Activated CD8-positive, alpha-beta memory T cell treated with anti-CD3 and anti-CD28 coated beads, Interleukin-2, amount 10 ng/mL, durations not matched to agents 7 days and 5 days (primary cell): ENCODE measurements at regions of chr7 and their contacts with region 1.

Region 1: DNA sequence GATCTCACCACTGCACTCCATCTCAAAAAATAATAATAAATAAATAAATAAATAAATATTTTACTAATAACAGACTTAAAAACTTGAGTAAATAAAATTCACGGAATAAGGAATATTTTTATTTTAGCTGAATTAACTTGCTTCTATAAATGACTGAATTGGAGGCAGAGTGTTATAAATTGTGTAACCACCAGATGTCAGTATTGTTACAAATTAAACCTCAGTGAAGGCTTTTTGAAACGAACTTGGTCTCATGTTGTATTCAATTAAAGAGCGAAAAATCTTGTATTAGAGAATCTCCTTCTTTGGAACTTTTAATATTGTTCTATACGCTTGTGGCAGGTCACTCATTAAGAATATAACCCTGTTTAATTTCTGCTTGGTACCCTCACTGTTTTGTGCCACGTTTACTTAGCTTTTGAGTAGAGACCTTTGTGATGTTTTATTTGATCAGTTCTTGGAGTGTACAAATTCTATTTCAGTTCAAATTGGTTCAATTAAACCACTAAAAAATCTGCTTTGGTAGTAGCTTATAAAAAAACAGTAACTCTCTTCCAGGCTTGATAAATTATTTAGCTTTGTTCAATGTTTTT is 45.6 kb upstream of the SCIN start:
- DNase-seq: no peak
- ATAC-seq: no peak
- H3K4me3 Mint-ChIP-seq: no peak overlapping the region
- H3K27ac Mint-ChIP-seq: no peak overlapping the region
- H3K4me1 Mint-ChIP-seq: no peaks in the 10 kb centered on the region
- H3K27me3 Mint-ChIP-seq: peaks cover 14% of the 10 kb centered on the region

Region 2: DNA sequence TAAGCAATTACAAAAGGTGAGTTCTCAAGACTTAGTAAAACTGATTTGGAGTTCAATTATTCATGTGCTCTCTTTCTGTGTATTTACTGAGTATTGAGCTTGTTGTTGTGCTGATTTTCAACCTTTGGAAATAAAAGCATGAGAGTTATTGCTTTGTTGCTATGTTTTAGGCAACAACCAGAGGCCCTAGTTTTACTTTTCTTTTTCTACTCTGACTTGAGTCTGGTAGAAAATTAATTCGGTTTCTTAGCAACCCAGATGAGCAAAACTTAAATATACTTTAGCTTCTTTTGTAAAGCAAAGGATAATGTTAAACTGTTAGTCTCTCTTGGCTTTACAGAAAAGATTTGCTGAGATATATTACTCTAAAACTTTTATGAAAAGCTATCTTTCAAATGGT is 20.7 kb before region 1 on chr7:
- CTCF ChIA-PET with region 1: no interaction called
- DNase-seq: no peak
- ATAC-seq: no peak
- H3K4me3 Mint-ChIP-seq: no peak overlapping the region
- H3K27ac Mint-ChIP-seq: no peak overlapping the region
- H3K4me1 Mint-ChIP-seq: no peaks in the 10 kb centered on the region
- H3K27me3 Mint-ChIP-seq: no peaks in the 10 kb centered on the region

Region 3: GRCh38 chr7:12549106-12549505 is 24.2 kb after region 1 on chr7:
- CTCF ChIA-PET with region 1: no interaction called
- DNase-seq: no peak
- ATAC-seq: no peak
- H3K4me3 Mint-ChIP-seq: no peak overlapping the region
- H3K27ac Mint-ChIP-seq: no peak overlapping the region
- H3K4me1 Mint-ChIP-seq: no peaks in the 10 kb centered on the region
- H3K27me3 Mint-ChIP-seq: peaks cover 8% of the 10 kb centered on the region

Region 4: DNA sequence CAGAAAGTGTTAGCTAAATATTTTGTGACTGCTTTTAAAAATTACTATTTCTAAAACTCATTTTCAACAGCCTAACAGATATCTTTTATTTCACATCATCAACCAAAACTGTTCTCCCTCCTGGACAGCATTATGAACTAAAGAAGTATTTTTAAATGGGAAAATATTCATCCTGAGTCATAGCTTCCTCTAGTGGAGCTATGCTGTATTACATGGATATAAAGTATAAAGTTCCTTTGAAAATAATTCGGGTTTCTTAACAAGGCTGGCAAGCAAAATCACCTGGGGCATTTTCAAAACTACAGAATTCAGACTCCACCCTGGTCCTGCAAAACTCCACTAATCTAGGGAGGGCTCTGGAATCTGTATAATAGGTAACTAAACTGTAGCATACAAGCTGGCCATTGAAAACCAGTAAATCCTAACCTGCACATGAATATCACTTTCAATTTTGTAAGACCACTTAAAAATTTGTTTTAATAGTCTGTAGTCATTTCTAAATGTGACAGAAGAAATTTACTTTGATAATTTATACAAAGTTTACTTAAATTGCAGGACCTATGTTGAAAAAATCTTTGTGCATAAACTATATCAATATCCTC is 99.1 kb after region 1 on chr7:
- CTCF ChIA-PET with region 1: interaction called, 13 read pairs
- DNase-seq: no peak
- ATAC-seq: no peak
- H3K4me3 Mint-ChIP-seq: no peak overlapping the region
- H3K27ac Mint-ChIP-seq: no peak overlapping the region
- H3K4me1 Mint-ChIP-seq: no peaks in the 10 kb centered on the region
- H3K27me3 Mint-ChIP-seq: peaks cover 10% of the 10 kb centered on the region